ENCODE measurements at regions of chr7 and their contacts with region 1.

Region 1: GRCh38 chr7:31744294-31744874 is 57.4 kb downstream of the PPP1R17 start:
- DNase-seq: peak; percentile 62 to 71
- H3K4me3 ChIP-seq: no peak overlapping the region
- H3K4me3 Mint-ChIP-seq: no peak overlapping the region
- H3K27ac Mint-ChIP-seq: no peak overlapping the region
- H3K4me1 ChIP-seq: no peaks in the 10 kb centered on the region
- H3K4me1 Mint-ChIP-seq: peaks cover 7% of the 10 kb centered on the region
- H3K27me3 ChIP-seq: peaks cover 1% of the 10 kb centered on the region
- H3K27me3 Mint-ChIP-seq: peaks cover 17% of the 10 kb centered on the region
- CTCF ChIP-seq: peak; percentile 89 to 94

Region 2: GRCh38 chr7:31521336-31522010 is 222.9 kb before region 1 on chr7:
- CTCF ChIA-PET with region 1: no interaction called
- POLR2A ChIA-PET with region 1: no interaction called
- intact Hi-C with region 1: no loop called
- DNase-seq: no peak
- H3K4me3 ChIP-seq: no peak overlapping the region
- H3K4me3 Mint-ChIP-seq: no peak overlapping the region
- H3K27ac Mint-ChIP-seq: no peak overlapping the region
- H3K4me1 ChIP-seq: no peaks in the 10 kb centered on the region; the same call in 1 of the 2 replicates
- H3K4me1 Mint-ChIP-seq: peaks cover 6% of the 10 kb centered on the region
- H3K27me3 ChIP-seq: no peaks in the 10 kb centered on the region
- H3K27me3 Mint-ChIP-seq: no peaks in the 10 kb centered on the region
- CTCF ChIP-seq: no peak

Region 3: GRCh38 chr7:31583942-31584341 is 160.4 kb before region 1 on chr7:
- CTCF ChIA-PET with region 1: no interaction called
- POLR2A ChIA-PET with region 1: no interaction called
- intact Hi-C with region 1: no loop called
- DNase-seq: no peak
- H3K4me3 ChIP-seq: no peak overlapping the region
- H3K4me3 Mint-ChIP-seq: no peak overlapping the region
- H3K27ac Mint-ChIP-seq: no peak overlapping the region
- H3K4me1 ChIP-seq: no peaks in the 10 kb centered on the region
- H3K4me1 Mint-ChIP-seq: no peaks in the 10 kb centered on the region
- H3K27me3 ChIP-seq: no peaks in the 10 kb centered on the region
- H3K27me3 Mint-ChIP-seq: no peaks in the 10 kb centered on the region
- CTCF ChIP-seq: no peak

Region 4: GRCh38 chr7:31782411-31782991 is 38.1 kb after region 1 on chr7:
- CTCF ChIA-PET with region 1: interaction called, 3 read pairs
- POLR2A ChIA-PET with region 1: no interaction called
- intact Hi-C with region 1: loop called (anchors 2 kb)
- DNase-seq: peak in 1 of 2 experiments; percentile 67
- H3K4me3 ChIP-seq: no peak overlapping the region
- H3K4me3 Mint-ChIP-seq: no peak overlapping the region
- H3K27ac Mint-ChIP-seq: no peak overlapping the region
- H3K4me1 ChIP-seq: no peaks in the 10 kb centered on the region
- H3K4me1 Mint-ChIP-seq: no peaks in the 10 kb centered on the region
- H3K27me3 ChIP-seq: no peaks in the 10 kb centered on the region; the same call in 1 of the 2 replicates
- H3K27me3 Mint-ChIP-seq: peaks cover 2% of the 10 kb centered on the region
- CTCF ChIP-seq: peak; percentile 73 to 77

Region 5: GRCh38 chr7:31796375-31796774 is 52.0 kb after region 1 on chr7:
- CTCF ChIA-PET with region 1: no interaction called
- POLR2A ChIA-PET with region 1: no interaction called
- intact Hi-C with region 1: no loop called
- DNase-seq: no peak
- H3K4me3 ChIP-seq: no peak overlapping the region
- H3K4me3 Mint-ChIP-seq: no peak overlapping the region
- H3K27ac Mint-ChIP-seq: no peak overlapping the region
- H3K4me1 ChIP-seq: no peaks in the 10 kb centered on the region
- H3K4me1 Mint-ChIP-seq: no peaks in the 10 kb centered on the region
- H3K27me3 ChIP-seq: no peaks in the 10 kb centered on the region
- H3K27me3 Mint-ChIP-seq: peaks cover 3% of the 10 kb centered on the region
- CTCF ChIP-seq: no peak

Region 6: GRCh38 chr7:32062150-32062549 is 317.8 kb after region 1 on chr7:
- CTCF ChIA-PET with region 1: interaction called, 4 read pairs
- POLR2A ChIA-PET with region 1: no interaction called
- intact Hi-C with region 1: loop called (anchors 1 kb)
- DNase-seq: peak; percentile 59 to 74
- H3K4me3 ChIP-seq: no peak overlapping the region
- H3K4me3 Mint-ChIP-seq: no peak overlapping the region
- H3K27ac Mint-ChIP-seq: no peak overlapping the region
- H3K4me1 ChIP-seq: no peaks in the 10 kb centered on the region
- H3K4me1 Mint-ChIP-seq: no peaks in the 10 kb centered on the region
- H3K27me3 ChIP-seq: no peaks in the 10 kb centered on the region; the same call in 1 of the 2 replicates
- H3K27me3 Mint-ChIP-seq: peaks cover 7% of the 10 kb centered on the region
- CTCF ChIP-seq: peak; percentile 57 to 71

Region 7: DNA sequence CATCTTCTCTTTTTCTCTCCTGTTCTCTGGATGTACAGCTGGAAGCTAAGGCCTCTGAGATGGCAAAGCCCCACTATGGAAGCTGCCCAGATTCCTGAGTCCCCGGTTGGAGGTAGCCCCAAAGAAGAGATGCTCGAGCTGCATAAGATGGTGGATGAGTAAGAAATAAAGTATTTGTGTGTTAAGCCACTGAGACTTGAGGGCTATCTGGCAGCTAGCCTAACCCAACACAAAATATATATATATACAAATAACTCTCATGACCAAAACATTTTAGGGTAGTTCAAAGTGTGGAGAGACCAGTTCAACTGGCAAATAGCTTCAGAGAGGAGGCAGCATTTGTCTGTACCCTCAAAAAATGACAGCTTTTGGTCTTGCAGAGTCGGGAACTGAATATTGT is 398.3 kb after region 1 on chr7:
- CTCF ChIA-PET with region 1: no interaction called
- POLR2A ChIA-PET with region 1: no interaction called
- intact Hi-C with region 1: no loop called
- DNase-seq: no peak
- H3K4me3 ChIP-seq: no peak overlapping the region
- H3K4me3 Mint-ChIP-seq: no peak overlapping the region
- H3K27ac Mint-ChIP-seq: no peak overlapping the region
- H3K4me1 ChIP-seq: no peaks in the 10 kb centered on the region
- H3K4me1 Mint-ChIP-seq: no peaks in the 10 kb centered on the region
- H3K27me3 ChIP-seq: no peaks in the 10 kb centered on the region
- H3K27me3 Mint-ChIP-seq: peaks cover 11% of the 10 kb centered on the region
- CTCF ChIP-seq: no peak

Region 8: DNA sequence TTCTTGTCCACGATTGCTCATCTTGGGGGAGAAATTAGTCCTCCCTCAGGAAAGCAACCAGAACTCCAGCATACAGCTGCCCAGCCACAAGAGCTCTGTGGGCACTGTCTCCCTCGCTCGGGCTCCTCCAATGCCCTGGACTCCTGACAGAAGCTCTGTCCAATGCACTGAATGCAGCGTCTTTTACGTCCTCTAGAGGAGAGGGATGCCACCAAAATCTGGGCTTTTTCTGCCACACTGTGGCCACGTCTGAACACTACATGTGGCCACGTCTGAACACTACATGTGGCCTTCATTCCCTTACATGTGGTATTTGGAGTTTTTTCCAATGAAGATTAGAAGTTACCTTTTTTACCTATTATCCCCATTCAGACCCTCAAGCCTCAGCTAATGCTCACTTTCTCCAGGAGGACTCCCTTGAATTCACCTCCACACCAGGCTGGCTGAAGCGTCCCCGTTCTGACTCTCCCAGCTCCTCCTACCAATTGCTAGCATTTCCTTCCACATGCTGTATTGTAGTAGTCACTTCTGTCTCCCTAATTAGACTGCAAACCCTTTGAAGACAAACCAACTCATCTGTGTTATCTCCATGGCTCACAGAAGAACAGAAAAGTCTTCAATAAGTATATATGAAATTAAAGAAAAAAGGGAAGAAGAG is 460.1 kb after region 1 on chr7:
- CTCF ChIA-PET with region 1: interaction called, 22 read pairs
- POLR2A ChIA-PET with region 1: no interaction called
- intact Hi-C with region 1: loop called (anchors 1 kb)
- DNase-seq: peak; percentile 62 to 67
- H3K4me3 ChIP-seq: no peak overlapping the region
- H3K4me3 Mint-ChIP-seq: no peak overlapping the region
- H3K27ac Mint-ChIP-seq: no peak overlapping the region
- H3K4me1 ChIP-seq: no peaks in the 10 kb centered on the region
- H3K4me1 Mint-ChIP-seq: no peaks in the 10 kb centered on the region
- H3K27me3 ChIP-seq: no peaks in the 10 kb centered on the region
- H3K27me3 Mint-ChIP-seq: peaks cover 29% of the 10 kb centered on the region
- CTCF ChIP-seq: peak; percentile 77 to 84

Region 9: GRCh38 chr7:32479574-32480200 is 735.3 kb after region 1 on chr7:
- CTCF ChIA-PET with region 1: interaction called, 6 read pairs
- POLR2A ChIA-PET with region 1: no interaction called
- intact Hi-C with region 1: loop called (anchors 10 kb)
- DNase-seq: peak in 1 of 2 experiments; percentile 54
- H3K4me3 ChIP-seq: no peak overlapping the region
- H3K4me3 Mint-ChIP-seq: no peak overlapping the region
- H3K27ac Mint-ChIP-seq: no peak overlapping the region
- H3K4me1 ChIP-seq: peaks cover 5% of the 10 kb centered on the region; the same call in 1 of the 2 replicates
- H3K4me1 Mint-ChIP-seq: peaks cover 3% of the 10 kb centered on the region
- H3K27me3 ChIP-seq: no peaks in the 10 kb centered on the region
- H3K27me3 Mint-ChIP-seq: no peaks in the 10 kb centered on the region
- CTCF ChIP-seq: peak; percentile 86 to 95

Measured in Caco-2 (cell line).